Activated B cell treated with CpG ODN at 0.5 μM for 24 hours (primary cell): ENCODE measurements at regions of chr12 and their contacts with region 1.

Region 1: GRCh38 chr12:9750276-9751203 is 10.2 kb downstream of the CD69 start:
- DNase-seq: no peak
- ATAC-seq: peak; percentile 85
- H3K4me3 Mint-ChIP-seq: no peak overlapping the region
- H3K27ac Mint-ChIP-seq: peak overlapping the region; percentile 57
- H3K4me1 Mint-ChIP-seq: peaks cover 35% of the 10 kb centered on the region
- H3K27me3 Mint-ChIP-seq: no peaks in the 10 kb centered on the region
- CTCF ChIP-seq: no peak

Region 2: DNA sequence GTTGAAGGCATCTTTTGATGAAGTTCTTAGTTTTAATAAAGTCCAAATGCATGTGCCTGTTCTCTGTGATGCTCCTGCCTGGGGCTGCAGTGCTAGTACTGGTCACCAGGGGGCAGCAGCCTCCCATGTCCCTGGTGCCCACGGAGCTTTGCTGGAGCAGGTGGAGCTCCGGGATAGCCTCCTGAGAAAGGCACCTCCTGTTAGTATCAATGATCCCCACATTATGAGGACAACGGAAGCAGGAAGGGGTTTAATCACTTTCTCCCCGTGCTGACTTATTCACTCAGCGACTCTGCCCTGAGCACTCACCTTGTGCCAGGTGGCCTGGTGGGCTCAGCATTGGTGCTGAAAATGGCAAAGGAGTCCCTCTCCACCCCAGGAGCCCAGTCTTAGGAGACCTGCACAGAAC is 419.3 kb before region 1 on chr12:
- CTCF ChIA-PET with region 1: interaction called, 30 read pairs
- POLR2A ChIA-PET with region 1: interaction called, 3 read pairs
- intact Hi-C with region 1: loop called (anchors 2 kb)
- DNase-seq: peak; percentile 65
- ATAC-seq: peak; percentile 96
- H3K4me3 Mint-ChIP-seq: no peak overlapping the region
- H3K27ac Mint-ChIP-seq: no peak overlapping the region
- H3K4me1 Mint-ChIP-seq: peaks cover 12% of the 10 kb centered on the region
- H3K27me3 Mint-ChIP-seq: no peaks in the 10 kb centered on the region
- CTCF ChIP-seq: peak; percentile 86

Region 3: GRCh38 chr12:9721394-9722092 is 29.0 kb before region 1 on chr12:
- CTCF ChIA-PET with region 1: interaction called, 14 read pairs
- POLR2A ChIA-PET with region 1: interaction called, 7 read pairs
- intact Hi-C with region 1: no loop called
- DNase-seq: no peak
- ATAC-seq: peak; percentile 85
- H3K4me3 Mint-ChIP-seq: peak overlapping the region; percentile 69
- H3K27ac Mint-ChIP-seq: peak overlapping the region; percentile 96
- H3K4me1 Mint-ChIP-seq: peaks cover 95% of the 10 kb centered on the region
- H3K27me3 Mint-ChIP-seq: no peaks in the 10 kb centered on the region
- CTCF ChIP-seq: no peak

Region 4: DNA sequence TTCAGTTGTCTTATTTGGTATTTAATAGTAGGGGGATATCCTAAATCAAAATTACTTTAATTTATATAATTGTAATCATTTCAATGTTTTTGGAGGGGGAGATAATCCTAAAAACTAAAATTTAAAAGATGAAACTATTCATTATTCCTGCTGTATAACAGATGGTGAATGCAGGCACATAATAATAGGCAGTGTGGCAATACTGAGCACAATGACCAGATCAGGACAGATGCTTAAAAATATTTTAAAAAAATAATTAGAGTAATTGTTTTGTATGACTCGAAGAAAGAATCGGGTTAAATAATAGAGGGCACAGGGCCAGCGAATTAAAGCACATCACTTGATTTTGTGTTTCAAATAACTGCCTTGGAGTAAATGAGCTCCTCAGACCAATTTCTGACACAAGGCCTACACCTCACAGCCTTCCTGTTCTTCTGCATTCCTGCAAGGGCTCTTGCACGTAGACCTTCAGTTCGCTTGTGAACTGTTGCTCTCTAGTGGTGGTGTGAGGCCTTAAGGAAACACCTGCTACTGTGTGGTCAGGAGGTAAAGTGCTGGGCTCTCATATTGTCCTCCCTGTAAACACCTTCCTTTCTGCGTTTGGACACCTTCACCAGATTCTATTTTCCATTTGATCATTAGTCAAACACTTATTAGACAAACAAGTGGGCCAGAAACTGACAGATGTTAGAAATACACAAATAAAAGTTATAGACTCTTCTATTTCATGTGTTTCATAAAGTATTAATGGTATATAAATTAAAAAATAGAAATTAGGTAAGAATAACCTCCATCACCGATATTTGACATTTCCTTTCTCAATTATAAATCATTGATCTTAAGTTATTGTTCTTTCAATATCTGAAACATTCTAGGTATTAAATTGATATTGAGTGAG is 47.4 kb after region 1 on chr12:
- CTCF ChIA-PET with region 1: interaction called, 451 read pairs
- POLR2A ChIA-PET with region 1: interaction called, 34 read pairs
- intact Hi-C with region 1: loop called (anchors 1 kb)
- DNase-seq: no peak
- ATAC-seq: peak; percentile 96
- H3K4me3 Mint-ChIP-seq: no peak overlapping the region
- H3K27ac Mint-ChIP-seq: no peak overlapping the region
- H3K4me1 Mint-ChIP-seq: peaks cover 34% of the 10 kb centered on the region
- H3K27me3 Mint-ChIP-seq: no peaks in the 10 kb centered on the region
- CTCF ChIP-seq: no peak

Region 5: DNA sequence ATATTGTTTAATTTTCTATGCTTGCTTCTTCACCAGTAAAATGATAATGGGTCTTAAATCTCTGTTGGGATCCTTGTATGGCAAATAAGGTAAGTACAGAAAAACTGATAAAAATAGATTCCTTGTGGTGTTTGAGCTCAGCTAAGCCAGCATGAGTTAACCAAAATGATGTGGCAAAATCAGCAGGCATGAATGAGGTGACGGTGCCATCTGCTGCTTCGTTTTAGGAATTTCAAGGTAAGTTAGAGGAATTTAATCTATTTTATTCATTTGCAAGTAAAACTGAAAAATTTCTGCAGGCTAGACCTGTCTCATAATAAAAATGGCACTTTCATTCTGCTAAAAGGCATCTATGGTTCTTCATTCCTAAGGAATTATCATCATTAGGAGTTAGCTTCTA is 389.5 kb after region 1 on chr12:
- CTCF ChIA-PET with region 1: interaction called, 24 read pairs
- POLR2A ChIA-PET with region 1: no interaction called
- intact Hi-C with region 1: loop called (anchors 1 kb)
- DNase-seq: no peak
- ATAC-seq: peak; percentile 60
- H3K4me3 Mint-ChIP-seq: no peak overlapping the region
- H3K27ac Mint-ChIP-seq: no peak overlapping the region
- H3K4me1 Mint-ChIP-seq: no peaks in the 10 kb centered on the region
- H3K27me3 Mint-ChIP-seq: peaks cover 27% of the 10 kb centered on the region
- CTCF ChIP-seq: no peak

Region 6: GRCh38 chr12:10364815-10365622 is 614.5 kb after region 1 on chr12:
- CTCF ChIA-PET with region 1: no interaction called
- POLR2A ChIA-PET with region 1: no interaction called
- intact Hi-C with region 1: loop called (anchors 10 kb)
- DNase-seq: peak; percentile 35
- ATAC-seq: peak; percentile 73
- H3K4me3 Mint-ChIP-seq: no peak overlapping the region
- H3K27ac Mint-ChIP-seq: no peak overlapping the region
- H3K4me1 Mint-ChIP-seq: peaks cover 7% of the 10 kb centered on the region
- H3K27me3 Mint-ChIP-seq: no peaks in the 10 kb centered on the region
- CTCF ChIP-seq: no peak

Region 7: DNA sequence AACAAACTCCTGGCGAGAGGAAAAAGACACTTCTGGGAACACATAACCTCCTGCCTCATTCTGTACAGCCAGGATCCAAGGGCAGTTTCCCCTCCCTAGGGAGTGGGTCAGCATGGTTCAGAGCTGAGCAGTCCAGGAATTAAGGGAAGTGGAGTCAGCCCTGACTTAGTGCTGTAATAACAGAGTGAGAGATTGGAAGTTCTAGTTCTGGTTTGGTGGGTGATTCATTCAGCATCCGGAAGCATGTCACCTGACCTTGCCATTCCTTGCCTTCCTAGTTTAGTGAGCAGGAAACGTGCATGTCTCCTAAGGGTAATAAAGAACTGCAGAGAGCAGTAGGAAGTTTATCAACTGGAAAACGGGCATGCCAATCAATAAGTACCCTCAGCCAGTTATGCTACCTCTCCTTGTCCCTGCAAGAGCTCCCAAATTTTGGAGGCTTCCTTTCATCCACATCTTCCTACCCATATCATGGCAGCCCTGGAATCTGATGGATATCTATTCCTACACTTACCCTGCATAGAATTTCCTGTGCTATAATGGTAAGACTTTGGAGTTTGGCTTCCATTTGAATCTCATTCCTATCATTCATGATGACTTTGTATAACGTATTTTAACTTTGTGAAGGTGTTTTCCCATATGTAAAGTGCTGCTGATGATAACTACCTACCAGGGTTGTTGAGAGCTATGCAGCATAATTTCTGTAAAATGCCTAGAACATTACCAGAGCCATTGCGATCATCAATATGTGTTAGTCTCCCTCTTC is 891.4 kb after region 1 on chr12:
- CTCF ChIA-PET with region 1: no interaction called
- POLR2A ChIA-PET with region 1: no interaction called
- intact Hi-C with region 1: no loop called
- DNase-seq: no peak
- ATAC-seq: no peak
- H3K4me3 Mint-ChIP-seq: no peak overlapping the region
- H3K27ac Mint-ChIP-seq: no peak overlapping the region
- H3K4me1 Mint-ChIP-seq: no peaks in the 10 kb centered on the region
- H3K27me3 Mint-ChIP-seq: peaks cover 12% of the 10 kb centered on the region
- CTCF ChIP-seq: no peak